ENCODE measurements at regions of chr10 and their contacts with region 1.

Region 1: DNA sequence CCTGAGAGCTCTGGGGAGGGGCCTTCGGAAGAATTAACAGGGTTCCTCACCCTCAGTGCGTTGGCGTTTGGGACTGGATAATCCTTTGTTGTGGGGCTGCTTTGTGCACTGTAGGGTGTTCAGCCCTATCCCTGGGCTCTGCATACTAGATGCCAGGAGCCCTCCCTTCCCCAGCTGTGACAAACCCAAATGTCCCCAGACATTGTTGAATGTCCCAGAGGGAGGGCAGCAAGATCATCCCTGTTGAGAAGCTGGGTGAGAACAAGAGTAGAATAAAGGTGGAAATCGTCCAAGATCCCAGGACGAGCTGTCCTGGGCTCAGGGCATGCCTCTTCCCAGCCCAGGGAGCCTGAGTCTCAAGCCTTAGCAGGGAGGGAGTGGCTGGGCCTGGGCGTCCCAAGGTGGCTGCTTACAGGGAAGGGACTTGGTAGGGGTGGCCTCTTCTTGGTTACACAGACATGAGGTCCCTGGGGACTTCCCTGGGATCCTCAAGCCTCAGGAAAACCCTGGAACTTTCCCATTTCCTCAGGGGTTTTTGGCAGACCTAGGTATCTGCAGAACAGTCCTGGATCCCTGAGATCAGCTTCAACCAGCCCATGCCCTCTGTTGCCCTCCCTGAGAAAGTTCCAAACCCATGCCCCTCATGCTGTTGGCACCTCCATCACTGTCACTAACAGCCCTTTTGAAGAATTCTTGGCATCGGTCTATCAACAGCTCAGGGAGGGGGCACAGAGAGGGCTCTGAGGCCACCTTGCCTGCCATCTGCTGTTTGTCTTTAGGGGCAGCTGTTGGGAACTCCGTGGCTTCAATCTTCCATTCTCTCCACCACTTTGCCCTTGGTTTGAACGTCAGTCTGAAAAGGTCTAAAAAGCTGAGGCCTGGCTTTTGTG is 53.7 kb downstream of the GOLGA7B start:
- DNase-seq: no peak
- H3K4me3 ChIP-seq: no peak overlapping the region
- H3K27ac ChIP-seq: no peak overlapping the region
- H3K4me1 ChIP-seq: peaks cover 0 to 7% (median 2%) of the 10 kb centered on the region in 4 experiments
- H3K27me3 ChIP-seq: peaks cover 0 to 13% (median 6%) of the 10 kb centered on the region in 5 experiments

Region 2: GRCh38 chr10:97914837-97915211 is 11.5 kb after region 1 on chr10:
- CTCF ChIA-PET with region 1: interaction called, 28 read pairs
- POLR2A ChIA-PET with region 1: no interaction called
- DNase-seq: peak; percentile 50 to 69 (median 58)
- H3K4me3 ChIP-seq: no peak overlapping the region
- H3K27ac ChIP-seq: no peak overlapping the region
- H3K4me1 ChIP-seq: no peaks in the 10 kb centered on the region
- H3K27me3 ChIP-seq: peaks cover 0 to 56% (median 16%) of the 10 kb centered on the region in 5 experiments